Activated T-helper 1 cell treated with anti-CD3 and anti-CD28 coated beads, Interleukin-12 subunit alpha, Interleukin-12 subunit beta, Interleukin-2, Interleukin-4 antibody, amounts not matched to agents 30 ng/mL and 10 ng/mL and 1 ng/mL, durations not matched to agents 14 hours and 24 hours and 36 hours (primary cell): ENCODE measurements at regions of chr9 and their contacts with region 1.

Region 1: GRCh38 chr9:97990266-97990665 is 7.1 kb downstream of the ANP32B start:
- DNase-seq: no peak
- H3K4me3 Mint-ChIP-seq: no peak overlapping the region
- H3K27ac Mint-ChIP-seq: peak overlapping the region; percentile 61
- H3K4me1 Mint-ChIP-seq: peaks cover 86% of the 10 kb centered on the region
- H3K27me3 Mint-ChIP-seq: no peaks in the 10 kb centered on the region

Region 2: DNA sequence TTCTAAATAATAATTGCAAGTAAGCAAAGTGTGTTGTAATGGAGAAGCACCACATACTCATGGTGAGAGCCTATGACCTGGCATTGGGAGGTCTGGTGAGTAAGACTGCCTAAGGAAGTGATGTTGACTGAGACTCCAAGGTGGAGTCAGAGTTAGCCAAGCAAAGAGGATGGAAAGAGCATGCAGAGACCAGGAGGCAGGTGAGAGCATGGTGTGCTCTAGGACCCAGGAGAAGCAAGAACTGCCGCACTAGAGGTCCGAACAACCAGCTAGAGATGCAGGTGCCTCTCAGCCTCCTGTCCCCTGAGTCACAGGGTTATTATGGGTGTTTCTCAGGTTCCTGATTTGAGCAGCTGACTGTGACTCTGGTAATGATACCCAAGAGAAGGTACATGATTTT is 20.2 kb after region 1 on chr9:
- intact Hi-C with region 1: loop called (anchors 2 kb)
- DNase-seq: no peak
- H3K4me3 Mint-ChIP-seq: no peak overlapping the region
- H3K27ac Mint-ChIP-seq: peak overlapping the region; percentile 61
- H3K4me1 Mint-ChIP-seq: peaks cover 24% of the 10 kb centered on the region
- H3K27me3 Mint-ChIP-seq: no peaks in the 10 kb centered on the region